Thyroid gland (tissue), 4 donors: ENCODE measurements at regions of chr17 and their contacts with region 1.

Region 1: GRCh38 chr17:47895856-47896671 is at the start of gene SP2:
- DNase-seq: peak; percentile 99 to 100
- H3K4me3 ChIP-seq: peak within 1 kb of the TSS; percentile 42 to 90 (median 84)
- H3K27ac ChIP-seq: peak within 1 kb of the TSS; percentile 98 to 100 (median 99)
- H3K4me1 ChIP-seq: peaks cover 24 to 53% of the 10 kb centered on the region in 2 donors
- H3K27me3 ChIP-seq: no peaks in the 10 kb centered on the region
- CTCF ChIP-seq: peak in 2 of 6 experiments; percentile 10 to 30
- POLR2A ChIP-seq: peak; percentile 91 to 95
- total RNA-seq, gene SP2: 7.1 to 14.1 (median 12.3) TPM

Region 2: GRCh38 chr17:47698749-47699535 is 197.1 kb before region 1 on chr17:
- intact Hi-C with region 1: loop called (anchors 10 kb)
- DNase-seq: peak; percentile 51 to 57
- H3K4me3 ChIP-seq: no peak overlapping the region
- H3K27ac ChIP-seq: no peak overlapping the region
- H3K4me1 ChIP-seq: peaks cover 7% of the 10 kb centered on the region in 2 donors
- H3K27me3 ChIP-seq: no peaks in the 10 kb centered on the region
- CTCF ChIP-seq: peak; percentile 53 to 97 (median 86)
- POLR2A ChIP-seq: no peak

Region 3: GRCh38 chr17:47840740-47841603 is 55.1 kb before region 1 on chr17 and contains the start of gene SCRN2:
- intact Hi-C with region 1: no loop called
- DNase-seq: peak; percentile 91 to 92
- H3K4me3 ChIP-seq: peak within 1 kb of the TSS; percentile 50 to 77 (median 53)
- H3K27ac ChIP-seq: peak within 1 kb of the TSS; percentile 34 to 63 (median 62)
- H3K4me1 ChIP-seq: peaks cover 11 to 26% of the 10 kb centered on the region in 2 donors
- H3K27me3 ChIP-seq: no peaks in the 10 kb centered on the region
- CTCF ChIP-seq: peak in 5 of 6 experiments; percentile 93 to 99 (median 98)
- POLR2A ChIP-seq: peak in 1 of 2 donors; percentile 59
- total RNA-seq, gene SCRN2: 37.0 to 71.5 (median 49.1) TPM

Region 4: DNA sequence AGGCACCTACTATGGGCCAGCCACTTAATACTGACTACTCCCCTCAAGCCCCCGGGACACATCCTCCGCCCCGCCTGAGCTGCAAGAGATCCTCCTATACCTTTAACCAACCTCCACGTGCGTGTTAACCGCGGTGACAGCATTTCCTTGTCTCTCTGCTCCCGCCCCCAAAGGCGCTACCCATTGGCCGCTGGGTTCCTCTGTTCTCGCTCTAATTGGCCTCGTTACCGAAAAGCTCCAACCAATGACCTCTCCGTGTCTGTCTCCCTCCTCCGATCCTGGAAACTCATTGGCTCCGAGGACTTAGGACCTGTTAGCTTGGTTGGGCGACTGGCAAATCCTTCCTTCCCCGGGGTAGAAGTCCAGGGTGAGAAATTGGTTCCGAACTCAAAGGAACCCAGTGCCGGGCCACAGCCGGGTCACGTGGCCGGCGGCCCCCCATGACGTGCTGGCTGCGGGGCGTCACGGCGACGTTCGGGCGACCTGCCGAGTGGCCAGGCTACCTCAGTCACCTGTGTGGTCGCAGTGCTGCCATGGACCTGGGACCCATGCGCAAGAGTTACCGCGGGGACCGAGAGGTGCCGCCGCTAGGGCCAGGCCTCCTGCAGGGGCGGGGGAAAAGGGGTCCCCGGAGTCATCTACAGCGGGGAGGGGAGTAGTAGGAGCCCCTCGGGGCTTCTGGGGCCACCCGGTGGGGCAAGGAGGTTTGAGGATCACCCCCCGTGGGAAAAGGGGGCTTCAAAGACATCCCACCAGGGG is 45.4 kb after region 1 on chr17 and contains the start of gene PNPO:
- intact Hi-C with region 1: loop called (anchors 5 kb)
- DNase-seq: peak; percentile 96
- H3K4me3 ChIP-seq: peak within 1 kb of the TSS; percentile 56 to 67 (median 64)
- H3K27ac ChIP-seq: peak within 1 kb of the TSS; percentile 49 to 89 (median 77)
- H3K4me1 ChIP-seq: peaks cover 26 to 41% of the 10 kb centered on the region in 2 donors
- H3K27me3 ChIP-seq: no peaks in the 10 kb centered on the region
- CTCF ChIP-seq: peak in 1 of 6 experiments; percentile 15
- POLR2A ChIP-seq: peak in 1 of 2 donors; percentile 85
- total RNA-seq, gene PNPO: 47.3 to 103 (median 78.9) TPM